Cardiac septum (tissue), 1 donor: ENCODE measurements at regions of chr11 and their contacts with region 1.

Region 1: DNA sequence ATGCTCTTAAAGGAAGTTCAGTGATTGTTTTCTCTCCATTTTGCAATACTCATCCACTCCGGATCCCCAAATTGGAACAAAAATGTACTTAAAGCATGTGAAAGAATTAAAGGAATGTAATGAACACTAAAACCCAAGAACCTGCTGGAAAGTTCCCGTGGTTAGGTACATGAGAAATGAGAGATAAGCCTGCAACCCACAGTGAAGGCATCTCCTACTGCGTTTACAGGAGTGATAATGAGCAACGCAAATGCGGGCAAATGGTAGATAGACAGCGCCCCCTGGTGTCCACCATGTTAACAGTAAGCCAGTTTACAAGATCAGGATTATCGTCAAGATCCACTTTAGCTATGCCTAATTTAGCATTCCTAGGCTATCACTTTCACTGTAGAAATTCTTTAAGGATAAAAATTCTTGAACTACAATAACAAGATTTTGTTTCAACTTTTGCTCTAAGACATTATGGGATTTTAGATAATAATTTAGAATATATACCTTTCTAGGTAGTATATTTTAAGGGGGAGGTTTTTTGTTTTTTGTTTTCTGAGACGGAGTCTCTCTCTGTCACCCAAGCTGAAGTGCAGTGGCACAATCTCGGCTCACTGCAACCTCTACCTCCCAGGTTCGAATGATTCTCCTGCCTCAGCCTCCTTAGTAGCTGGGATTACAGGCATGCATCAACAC is 29.9 kb downstream of the ALG9 start:
- DNase-seq: peak; percentile 89

Region 2: GRCh38 chr11:111565114-111565720 is 276.3 kb before region 1 on chr11:
- intact Hi-C with region 1: loop called (anchors 5 kb)
- DNase-seq: no peak

Region 3: DNA sequence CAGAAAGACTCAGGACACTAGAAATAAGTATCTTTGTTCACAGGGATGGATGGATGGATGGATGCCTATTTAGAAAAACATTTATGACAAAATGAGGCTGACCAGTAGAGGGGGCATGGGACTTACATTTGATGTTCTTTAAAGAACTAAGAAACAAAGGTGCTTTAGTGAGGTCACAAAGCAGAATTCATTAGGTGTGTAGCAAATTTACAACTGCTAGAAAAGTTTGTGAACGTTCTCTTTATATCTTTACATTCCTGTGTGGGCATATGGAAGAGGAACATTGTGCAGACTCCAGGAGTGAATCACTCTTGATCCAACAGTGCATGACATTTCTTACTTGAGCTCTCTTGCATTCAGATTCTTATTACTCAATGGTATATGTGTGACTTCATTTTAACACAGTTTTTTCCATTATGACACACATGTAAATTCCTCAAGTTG is 255.1 kb before region 1 on chr11:
- intact Hi-C with region 1: loop called (anchors 5 kb)
- DNase-seq: no peak

Region 4: DNA sequence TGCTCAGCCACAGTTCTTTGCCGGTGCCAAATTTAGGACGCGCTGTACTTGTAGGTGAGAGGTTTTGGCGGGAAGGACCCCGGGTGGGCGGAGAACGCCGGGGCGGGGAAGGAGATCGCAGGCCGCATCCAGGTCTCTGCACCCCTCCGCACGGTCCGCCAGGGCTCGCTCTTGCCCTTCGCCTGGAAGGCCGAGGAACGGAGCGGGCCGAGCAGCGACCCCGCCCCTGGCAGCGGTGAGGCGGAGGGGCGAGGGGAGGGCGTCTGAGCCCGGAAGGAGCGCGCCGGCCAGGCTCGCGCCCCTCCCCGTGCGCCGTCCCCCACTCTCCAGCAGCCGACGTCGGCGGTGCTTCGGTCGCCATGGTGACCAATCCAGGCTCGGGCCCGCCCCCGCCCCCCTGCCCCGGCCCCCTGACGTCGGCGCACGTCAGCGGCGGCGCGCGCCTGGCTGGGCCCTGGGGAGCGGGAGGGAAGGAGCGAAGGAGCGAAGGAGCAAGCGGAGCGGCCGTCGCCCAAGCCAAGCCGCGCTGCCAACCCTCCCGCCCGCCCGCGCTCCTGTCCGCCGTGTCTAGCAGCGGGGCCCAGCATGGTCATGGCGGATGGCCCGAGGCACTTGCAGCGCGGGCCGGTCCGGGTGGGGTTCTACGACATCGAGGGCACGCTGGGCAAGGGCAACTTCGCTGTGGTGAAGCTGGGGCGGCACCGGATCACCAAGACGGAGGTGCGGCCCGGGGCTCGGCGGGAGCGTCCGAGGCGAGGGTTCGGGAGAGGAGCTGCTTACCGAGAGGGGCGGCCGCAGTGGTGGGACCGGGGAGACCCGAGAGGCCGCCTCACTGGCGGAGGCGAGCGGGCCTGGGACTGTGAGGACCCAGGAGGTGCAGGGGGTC is 239.3 kb before region 1 on chr11 and contains the start of gene SIK2:
- intact Hi-C with region 1: loop called (anchors 5 kb)
- DNase-seq: peak; percentile 93
- total RNA-seq, gene SIK2: 27.3 TPM

Region 5: GRCh38 chr11:111777094-111778046 is 64.1 kb before region 1 on chr11:
- intact Hi-C with region 1: loop called (anchors 5 kb)
- DNase-seq: no peak